Transverse colon (tissue), 4 donors: ENCODE measurements at regions of chr11 and their contacts with region 1.

Region 1: GRCh38 chr11:71574418-71574817 is 8.3 kb downstream of the KRTAP5-11 start:
- DNase-seq: no peak
- H3K4me3 ChIP-seq: no peak overlapping the region
- H3K27ac ChIP-seq: no peak overlapping the region
- H3K4me1 ChIP-seq: no peaks in the 10 kb centered on the region
- H3K27me3 ChIP-seq: no peaks in the 10 kb centered on the region
- CTCF ChIP-seq: no peak
- EP300 ChIP-seq: no peak
- POLR2A ChIP-seq: no peak

Region 2: GRCh38 chr11:71266221-71266833 is 308.1 kb before region 1 on chr11:
- in situ Hi-C with region 1: no loop called
- intact Hi-C with region 1: no loop called
- DNase-seq: peak; percentile 75
- H3K4me3 ChIP-seq: no peak overlapping the region
- H3K27ac ChIP-seq: peak overlapping the region in 1 of 4 donors; percentile 26
- H3K4me1 ChIP-seq: peaks cover 0 to 24% (median 18%) of the 10 kb centered on the region in 4 donors
- H3K27me3 ChIP-seq: no peaks in the 10 kb centered on the region
- CTCF ChIP-seq: peak in 1 of 5 experiments; percentile 47
- EP300 ChIP-seq: no peak
- POLR2A ChIP-seq: no peak

Region 3: DNA sequence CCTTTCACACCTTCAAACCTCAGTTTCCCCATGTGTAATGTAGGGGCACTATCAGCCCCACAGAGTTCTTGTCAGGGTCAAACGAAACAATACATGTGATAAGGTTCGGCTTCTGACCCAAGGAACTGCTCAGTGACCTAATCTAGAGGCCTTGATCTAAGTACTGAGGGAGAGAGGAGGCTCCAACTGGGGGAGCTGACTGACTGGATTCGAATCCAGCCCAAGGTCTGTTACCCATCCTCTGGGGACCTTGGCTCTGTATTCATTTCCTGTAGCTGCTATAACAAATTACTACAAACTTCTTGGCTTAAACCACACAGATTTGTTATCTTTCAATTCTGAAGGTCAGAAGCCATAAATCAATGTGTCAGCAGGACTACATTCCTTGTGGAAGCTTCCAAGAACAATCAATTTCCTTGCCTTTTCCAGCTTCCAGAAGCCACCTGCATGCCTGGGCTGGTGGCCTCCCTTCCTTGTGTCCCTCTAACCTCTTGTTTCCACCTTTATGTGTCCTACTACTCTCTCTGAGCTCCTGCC is 548.8 kb after region 1 on chr11:
- in situ Hi-C with region 1: no loop called
- intact Hi-C with region 1: loop called (anchors 10 kb)
- DNase-seq: no peak
- H3K4me3 ChIP-seq: no peak overlapping the region
- H3K27ac ChIP-seq: no peak overlapping the region
- H3K4me1 ChIP-seq: no peaks in the 10 kb centered on the region
- H3K27me3 ChIP-seq: no peaks in the 10 kb centered on the region
- CTCF ChIP-seq: no peak
- EP300 ChIP-seq: no peak
- POLR2A ChIP-seq: no peak